ENCODE measurements at regions of chr1 and their contacts with region 1.

Region 1: GRCh38 chr1:4652631-4653327 is 1.6 kb upstream of the AJAP1 start:
- DNase-seq: peak in 7 of 10 donors; percentile 49 to 85 (median 71)
- H3K4me3 ChIP-seq: peak overlapping the region in 15 of 59 donors; percentile 5 to 76 (median 26)
- H3K27ac ChIP-seq: peak overlapping the region in 47 of 59 donors; percentile 31 to 98 (median 69)
- H3K27me3 ChIP-seq: peaks cover 0 to 17% (median 0%) of the 10 kb centered on the region in 45 donors
- CTCF ChIP-seq: peak; percentile 74 to 99 (median 97)

Region 2: GRCh38 chr1:3910857-3911845 is 741.6 kb before region 1 on chr1:
- intact Hi-C with region 1: loop called (anchors 5 to 10 kb)
- DNase-seq: peak; percentile 48 to 83 (median 64)
- H3K4me3 ChIP-seq: peak overlapping the region in 16 of 59 donors; percentile 7 to 39 (median 22)
- H3K27ac ChIP-seq: no peak overlapping the region
- H3K27me3 ChIP-seq: peaks cover 0 to 10% (median 0%) of the 10 kb centered on the region in 45 donors
- CTCF ChIP-seq: peak; percentile 45 to 83 (median 69)

Region 3: DNA sequence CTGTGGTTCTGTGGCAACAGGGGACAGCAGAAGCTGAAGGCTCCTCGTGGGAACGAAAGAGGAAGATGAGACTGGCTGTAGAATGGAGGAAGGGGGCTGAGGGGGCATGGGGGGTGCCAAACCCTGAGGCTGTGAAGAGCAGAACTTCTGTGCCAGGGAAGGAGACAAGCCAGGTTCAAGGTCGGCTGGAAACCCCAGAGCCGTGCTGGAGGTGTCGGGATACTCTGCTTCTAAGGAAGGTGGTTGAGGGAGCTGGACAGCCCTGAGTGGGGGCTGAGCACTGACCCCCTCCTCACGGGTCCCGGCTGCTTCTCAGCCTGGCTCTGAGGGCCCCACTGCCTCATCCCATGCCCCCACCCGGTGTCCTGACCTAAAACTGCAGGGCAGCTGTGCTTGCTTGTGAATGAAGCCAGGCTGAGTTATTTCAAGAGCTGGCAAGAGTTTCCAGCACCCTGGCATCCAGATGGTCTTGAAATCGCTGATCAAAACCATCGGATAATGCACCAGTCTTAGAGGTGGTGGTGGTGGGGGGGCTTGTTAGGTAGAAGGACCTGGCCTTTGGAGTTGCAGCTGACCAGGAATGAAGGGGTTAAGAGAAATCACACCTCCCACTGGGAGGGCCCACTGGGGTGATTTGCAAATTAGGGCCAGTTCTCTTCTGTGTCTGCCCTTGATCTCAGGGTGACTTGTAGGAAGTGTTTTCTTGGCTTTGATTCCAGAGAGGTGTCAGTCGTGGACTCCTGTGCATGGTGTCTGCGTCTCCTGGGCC is 533.8 kb before region 1 on chr1:
- intact Hi-C with region 1: no loop called
- DNase-seq: peak in 2 of 10 donors; percentile 2 to 3
- H3K4me3 ChIP-seq: no peak overlapping the region
- H3K27ac ChIP-seq: no peak overlapping the region
- H3K27me3 ChIP-seq: peaks cover 0 to 7% (median 0%) of the 10 kb centered on the region in 45 donors
- CTCF ChIP-seq: no peak

Region 4: DNA sequence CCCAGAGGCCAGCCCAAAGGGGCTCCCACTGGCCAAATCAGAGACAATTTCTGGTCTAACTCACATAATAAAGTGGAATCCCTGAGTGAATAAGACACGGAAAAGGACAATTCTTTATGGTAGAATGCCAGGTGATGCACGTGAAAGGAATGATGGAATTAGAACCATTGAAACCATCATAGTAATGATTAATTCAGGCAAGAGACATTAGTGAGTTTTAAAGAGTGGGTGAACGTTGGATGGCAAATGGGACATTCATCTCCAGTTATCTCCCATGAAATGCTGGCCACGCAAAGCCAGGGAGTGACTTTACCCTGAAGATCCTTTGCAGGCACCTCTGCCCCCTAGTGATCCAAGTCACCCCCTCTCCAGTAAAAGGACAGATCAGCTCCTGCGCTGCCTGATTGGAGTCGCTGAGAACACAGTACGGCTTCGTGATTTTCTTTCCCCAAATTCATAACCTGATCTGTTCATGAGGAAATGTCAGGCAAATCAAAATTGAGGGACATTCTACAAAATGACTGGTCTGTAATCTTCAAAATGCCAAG is 89.2 kb after region 1 on chr1:
- intact Hi-C with region 1: loop called in 1 of 2 experiments (anchors 5 kb)
- DNase-seq: peak in 1 of 10 donors; percentile 53
- H3K4me3 ChIP-seq: no peak overlapping the region
- H3K27ac ChIP-seq: no peak overlapping the region
- H3K27me3 ChIP-seq: no peaks in the 10 kb centered on the region
- CTCF ChIP-seq: peak in 30 of 56 donors; percentile 4 to 61 (median 30)

Region 5: DNA sequence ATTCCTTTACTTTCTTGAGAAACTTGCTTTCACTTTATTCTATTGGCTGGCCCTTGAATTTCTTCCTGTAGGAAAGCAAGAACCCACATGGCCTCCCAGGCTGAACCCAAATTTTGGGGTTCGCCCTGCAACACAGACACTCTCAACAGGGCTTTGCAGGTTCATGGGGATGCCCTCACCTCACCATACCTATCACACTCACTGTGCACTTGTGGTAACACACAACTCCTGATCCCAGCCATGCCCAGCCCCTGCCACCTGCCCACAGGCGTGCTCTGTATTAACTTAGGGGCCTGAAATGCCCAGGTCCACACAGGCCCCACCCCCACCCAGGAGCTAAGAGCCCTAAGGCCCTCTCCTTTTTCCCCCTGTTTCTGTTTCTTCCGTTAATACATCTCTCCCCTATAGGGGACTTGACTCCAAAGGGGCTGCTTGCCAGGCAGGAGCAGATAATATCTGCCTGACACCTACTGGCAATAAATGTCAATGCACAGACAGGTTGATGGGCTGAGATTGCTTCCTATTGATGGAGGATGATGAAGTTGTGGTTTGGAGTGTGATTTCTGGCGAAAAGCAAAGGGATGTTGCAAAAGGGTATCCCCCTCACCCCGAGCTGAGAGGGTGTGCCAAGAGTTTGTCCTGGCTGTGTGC is 173.1 kb after region 1 on chr1:
- intact Hi-C with region 1: loop called (anchors 2 kb)
- DNase-seq: peak in 3 of 10 donors; percentile 14 to 54 (median 49)
- H3K4me3 ChIP-seq: no peak overlapping the region
- H3K27ac ChIP-seq: no peak overlapping the region
- H3K27me3 ChIP-seq: no peaks in the 10 kb centered on the region
- CTCF ChIP-seq: peak in 54 of 56 donors; percentile 44 to 78 (median 61)

Region 6: GRCh38 chr1:5514519-5515183 is 861.9 kb after region 1 on chr1:
- intact Hi-C with region 1: loop called in 1 of 2 experiments (anchors 10 kb)
- DNase-seq: peak in 9 of 10 donors; percentile 64 to 85 (median 73)
- H3K4me3 ChIP-seq: no peak overlapping the region
- H3K27ac ChIP-seq: no peak overlapping the region
- H3K27me3 ChIP-seq: no peaks in the 10 kb centered on the region
- CTCF ChIP-seq: peak; percentile 97 to 100 (median 99)

Region 7: GRCh38 chr1:5975133-5975880 is 1322.5 kb after region 1 on chr1:
- intact Hi-C with region 1: loop called in 1 of 2 experiments (anchors 10 kb)
- DNase-seq: peak in 8 of 10 donors; percentile 52 to 85 (median 78)
- H3K4me3 ChIP-seq: no peak overlapping the region
- H3K27ac ChIP-seq: peak overlapping the region in 31 of 59 donors; percentile 1 to 70 (median 48)
- H3K27me3 ChIP-seq: no peaks in the 10 kb centered on the region
- CTCF ChIP-seq: peak; percentile 42 to 91 (median 78)